ENCODE measurements at regions of chr20 and their contacts with region 1.

Region 1: DNA sequence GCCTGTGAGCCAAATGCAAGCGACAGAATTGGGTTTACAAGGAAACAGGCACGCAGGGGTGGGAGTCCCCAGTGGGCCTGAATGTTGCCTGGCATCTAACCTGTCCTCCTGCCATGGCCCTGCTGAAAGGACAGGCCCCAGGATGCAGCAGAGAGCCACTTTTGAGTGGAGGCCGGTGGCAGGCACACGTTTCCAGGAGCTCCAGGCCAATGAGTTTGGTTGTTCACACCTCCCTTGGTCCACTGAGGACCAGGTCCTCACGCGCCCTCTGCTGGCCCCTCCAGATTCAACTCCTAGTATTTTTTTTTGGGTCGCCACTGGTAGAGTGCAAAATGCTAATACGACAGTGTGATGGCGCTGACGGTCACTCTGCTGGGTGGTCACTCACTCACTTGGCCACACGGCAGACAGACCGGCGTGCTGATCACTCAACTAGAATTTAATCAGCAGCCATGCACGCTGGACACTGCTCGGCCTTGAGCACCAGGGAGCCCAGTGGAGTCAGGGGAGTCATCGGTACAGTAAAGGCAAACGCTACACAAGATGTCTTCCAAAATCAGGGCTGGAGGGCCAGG is 81.7 kb upstream of the NFATC2 start:
- DNase-seq: peak; percentile 79
- H3K4me3 Mint-ChIP-seq: no peak overlapping the region
- H3K27ac Mint-ChIP-seq: no peak overlapping the region
- H3K4me1 Mint-ChIP-seq: no peaks in the 10 kb centered on the region
- H3K27me3 Mint-ChIP-seq: no peaks in the 10 kb centered on the region
- CTCF ChIP-seq: peak; percentile 58

Region 2: DNA sequence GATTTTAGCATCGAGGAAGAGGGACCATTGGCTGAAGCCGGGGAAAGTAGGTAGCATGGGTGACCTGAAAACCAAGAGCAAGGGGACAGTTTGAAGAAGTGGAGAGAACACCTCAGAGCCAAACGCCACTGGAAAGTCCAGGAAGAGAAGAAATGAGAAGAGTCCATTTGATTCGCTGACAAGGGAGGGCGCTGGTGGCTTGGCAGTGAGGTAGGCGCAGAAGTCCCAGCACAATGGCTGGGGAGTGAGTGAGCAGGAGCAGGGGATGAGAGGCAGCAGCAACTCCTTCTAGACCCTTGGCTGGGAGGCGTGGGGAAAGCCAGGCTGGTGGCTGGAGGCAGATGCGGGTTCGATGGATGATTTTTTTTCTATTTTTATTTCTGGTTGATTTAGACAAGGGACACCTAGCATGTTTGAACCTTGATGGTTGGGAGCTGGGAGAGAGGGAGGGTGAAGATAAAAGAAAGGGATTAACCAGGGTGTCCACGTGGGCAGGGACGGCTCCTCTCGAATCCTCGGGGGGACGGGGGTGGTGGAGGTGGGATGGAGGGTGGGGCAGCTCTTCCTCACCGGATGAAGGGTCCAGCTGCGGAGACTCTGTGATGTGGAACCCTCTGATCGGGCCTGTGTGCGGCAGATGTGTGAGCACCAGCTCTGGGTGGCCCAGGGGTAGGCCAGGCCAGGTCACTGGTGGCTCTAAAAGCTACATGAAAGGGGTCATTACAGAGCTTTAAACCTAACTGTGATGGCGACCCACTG is 245.9 kb before region 1 on chr20:
- CTCF ChIA-PET with region 1: interaction called, 60 read pairs
- POLR2A ChIA-PET with region 1: no interaction called
- intact Hi-C with region 1: no loop called
- DNase-seq: no peak
- H3K4me3 Mint-ChIP-seq: no peak overlapping the region
- H3K27ac Mint-ChIP-seq: no peak overlapping the region
- H3K4me1 Mint-ChIP-seq: no peaks in the 10 kb centered on the region
- H3K27me3 Mint-ChIP-seq: no peaks in the 10 kb centered on the region
- CTCF ChIP-seq: peak; percentile 10